Transverse colon (tissue), 4 donors: ENCODE measurements at regions of chr15 and their contacts with region 1.

Region 1: GRCh38 chr15:90691982-90692773 is 25.0 kb upstream of the BLM start:
- DNase-seq: no peak
- H3K4me3 ChIP-seq: no peak overlapping the region
- H3K27ac ChIP-seq: no peak overlapping the region
- H3K4me1 ChIP-seq: no peaks in the 10 kb centered on the region
- H3K27me3 ChIP-seq: no peaks in the 10 kb centered on the region
- CTCF ChIP-seq: no peak
- EP300 ChIP-seq: no peak
- POLR2A ChIP-seq: no peak

Region 2: GRCh38 chr15:90436952-90437351 is 255.2 kb before region 1 on chr15:
- in situ Hi-C with region 1: no loop called
- intact Hi-C with region 1: no loop called
- DNase-seq: no peak
- H3K4me3 ChIP-seq: no peak overlapping the region
- H3K27ac ChIP-seq: no peak overlapping the region
- H3K4me1 ChIP-seq: peaks cover 6 to 39% (median 19%) of the 10 kb centered on the region in 4 donors
- H3K27me3 ChIP-seq: no peaks in the 10 kb centered on the region
- CTCF ChIP-seq: no peak
- EP300 ChIP-seq: no peak
- POLR2A ChIP-seq: no peak

Region 3: GRCh38 chr15:90648137-90649070 is 43.8 kb before region 1 on chr15:
- in situ Hi-C with region 1: loop called in 1 of 4 experiments (anchors 10 kb)
- intact Hi-C with region 1: no loop called
- DNase-seq: peak; percentile 67
- H3K4me3 ChIP-seq: peak overlapping the region in 1 of 4 donors; percentile 16
- H3K27ac ChIP-seq: peak overlapping the region; percentile 43 to 72 (median 60)
- H3K4me1 ChIP-seq: peaks cover 0 to 17% (median 9%) of the 10 kb centered on the region in 4 donors
- H3K27me3 ChIP-seq: no peaks in the 10 kb centered on the region
- CTCF ChIP-seq: peak; percentile 85 to 95 (median 89)
- EP300 ChIP-seq: peak; percentile 49
- POLR2A ChIP-seq: no peak